Activated CD8-positive, alpha-beta T cell treated with anti-CD3 and anti-CD28 coated beads for 36 hours (primary cell): ENCODE measurements at regions of chr11 and their contacts with region 1.

Region 1: DNA sequence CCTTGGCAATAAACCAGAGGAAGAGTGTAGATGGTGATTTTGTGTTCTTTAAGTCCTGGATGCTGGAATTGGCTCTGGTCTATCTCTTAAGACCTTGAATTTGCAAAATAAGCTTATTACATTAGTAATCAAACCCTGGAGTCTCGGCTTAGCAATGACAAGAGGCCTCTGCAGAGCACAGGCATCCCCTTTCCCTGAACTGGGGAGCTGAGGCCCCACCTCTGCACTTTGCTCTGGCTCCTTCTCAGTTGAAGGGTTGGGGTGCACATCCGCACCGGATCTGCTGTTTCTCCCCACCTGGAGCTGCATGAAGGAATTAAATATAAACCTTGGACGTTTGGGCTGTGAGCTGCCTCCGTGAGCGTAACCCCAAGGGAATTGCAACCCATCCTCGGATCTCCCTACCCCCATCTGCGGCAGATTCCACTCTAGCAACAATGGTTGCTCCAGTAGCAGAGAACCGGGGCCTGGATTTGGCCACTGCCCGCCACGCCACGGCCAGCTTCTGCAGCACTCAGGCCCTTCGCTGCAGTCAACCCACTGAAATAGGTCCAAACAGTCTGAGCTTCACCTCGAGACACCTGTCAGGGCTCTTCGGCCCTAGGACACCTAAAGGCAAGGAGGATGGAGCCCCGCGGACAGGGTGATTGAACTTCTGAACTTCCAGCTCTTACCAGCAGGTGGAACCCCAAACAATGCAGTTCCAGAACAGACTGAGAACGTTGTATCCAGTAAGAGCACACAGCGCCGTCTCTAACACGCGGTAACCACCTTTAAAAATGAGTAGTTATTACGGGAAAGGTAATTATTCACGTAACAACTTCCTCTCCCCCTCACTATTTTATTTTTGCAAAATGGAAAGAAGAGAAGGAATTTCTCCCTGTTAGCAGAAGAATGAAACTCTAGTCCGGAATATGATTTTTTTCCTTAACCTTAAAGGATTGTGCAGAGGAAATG is 54.8 kb upstream of the CAPRIN1 start:
- DNase-seq: peak; percentile 85
- ATAC-seq: peak; percentile 100
- H3K4me3 Mint-ChIP-seq: peak overlapping the region; percentile 40
- H3K27ac Mint-ChIP-seq: no peak overlapping the region
- H3K4me1 Mint-ChIP-seq: peaks cover 8% of the 10 kb centered on the region
- H3K27me3 Mint-ChIP-seq: peaks cover 25% of the 10 kb centered on the region
- CTCF ChIP-seq: peak; percentile 85

Region 2: GRCh38 chr11:33857933-33858371 is 138.8 kb before region 1 on chr11:
- CTCF ChIA-PET with region 1: interaction called, 13 read pairs
- POLR2A ChIA-PET with region 1: no interaction called
- intact Hi-C with region 1: no loop called
- DNase-seq: peak; percentile 86
- ATAC-seq: peak; percentile 90
- H3K4me3 Mint-ChIP-seq: no peak overlapping the region
- H3K27ac Mint-ChIP-seq: no peak overlapping the region
- H3K4me1 Mint-ChIP-seq: no peaks in the 10 kb centered on the region
- H3K27me3 Mint-ChIP-seq: peaks cover 34% of the 10 kb centered on the region
- CTCF ChIP-seq: peak; percentile 86

Region 3: GRCh38 chr11:33926671-33927552 is 69.9 kb before region 1 on chr11:
- CTCF ChIA-PET with region 1: no interaction called
- POLR2A ChIA-PET with region 1: no interaction called
- intact Hi-C with region 1: no loop called
- DNase-seq: no peak
- ATAC-seq: no peak
- H3K4me3 Mint-ChIP-seq: no peak overlapping the region
- H3K27ac Mint-ChIP-seq: no peak overlapping the region
- H3K4me1 Mint-ChIP-seq: peaks cover 3% of the 10 kb centered on the region
- H3K27me3 Mint-ChIP-seq: peaks cover 26% of the 10 kb centered on the region
- CTCF ChIP-seq: no peak

Region 4: GRCh38 chr11:34051349-34052035 is 54.7 kb after region 1 on chr11 and contains the start of gene CAPRIN1:
- CTCF ChIA-PET with region 1: interaction called, 7 read pairs
- POLR2A ChIA-PET with region 1: interaction called, 5 read pairs
- intact Hi-C with region 1: loop called (anchors 5 kb)
- DNase-seq: peak; percentile 88
- ATAC-seq: peak; percentile 79
- H3K4me3 Mint-ChIP-seq: peak within 1 kb of the TSS; percentile 97
- H3K27ac Mint-ChIP-seq: peak within 1 kb of the TSS; percentile 99
- H3K4me1 Mint-ChIP-seq: peaks cover 15% of the 10 kb centered on the region
- H3K27me3 Mint-ChIP-seq: no peaks in the 10 kb centered on the region
- CTCF ChIP-seq: no peak
- total RNA-seq, gene CAPRIN1: 297 to 328 TPM

Region 5: DNA sequence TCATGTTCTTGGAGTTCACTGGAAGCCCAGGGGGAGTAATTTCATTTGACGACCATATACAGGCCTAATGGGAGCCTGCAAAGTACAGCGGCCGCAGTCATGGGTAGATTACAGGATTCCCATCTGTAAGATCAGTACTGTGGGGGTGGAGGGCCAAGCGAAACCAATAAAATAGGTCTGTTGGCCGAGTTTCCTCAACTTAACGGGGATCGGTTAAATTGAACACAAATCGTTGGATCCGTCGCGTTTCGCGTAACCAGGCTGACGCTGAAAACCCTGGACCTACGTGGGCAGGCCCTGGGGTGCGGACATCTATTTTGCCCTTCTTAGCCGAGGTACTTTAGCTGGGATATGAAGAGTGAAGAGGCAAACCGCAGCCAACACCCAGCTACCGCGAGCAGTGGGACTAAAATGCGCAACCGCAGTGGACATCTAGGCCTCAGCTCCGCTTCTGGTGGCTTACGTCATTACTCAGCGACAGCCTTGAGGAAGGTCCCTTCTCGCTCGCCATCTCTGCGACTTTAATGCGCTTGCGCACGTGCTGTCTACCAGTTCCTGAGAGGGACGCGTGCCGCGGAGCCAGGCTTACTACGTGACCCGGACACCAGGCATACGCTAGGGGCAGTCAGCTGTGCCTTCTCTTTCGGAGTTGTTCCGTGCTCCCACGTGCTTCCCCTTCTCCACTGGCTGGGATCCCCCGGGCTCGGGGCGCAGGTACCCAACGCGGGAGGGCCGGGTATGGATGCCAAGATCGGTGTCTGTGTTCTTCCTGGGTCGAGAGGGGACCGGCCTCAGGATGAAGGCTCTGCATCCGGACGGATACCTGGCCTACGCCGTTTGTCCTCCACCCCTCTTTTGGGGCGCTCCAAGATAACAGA is 108.5 kb after region 1 on chr11 and contains the start of gene NAT10:
- CTCF ChIA-PET with region 1: interaction called, 11 read pairs
- POLR2A ChIA-PET with region 1: interaction called, 3 read pairs
- intact Hi-C with region 1: loop called (anchors 10 kb)
- DNase-seq: peak; percentile 98
- ATAC-seq: peak; percentile 93
- H3K4me3 Mint-ChIP-seq: peak within 1 kb of the TSS; percentile 97
- H3K27ac Mint-ChIP-seq: peak within 1 kb of the TSS; percentile 97
- H3K4me1 Mint-ChIP-seq: peaks cover 42% of the 10 kb centered on the region
- H3K27me3 Mint-ChIP-seq: no peaks in the 10 kb centered on the region
- CTCF ChIP-seq: no peak
- total RNA-seq, gene NAT10: 129 to 137 TPM

Region 6: GRCh38 chr11:34357701-34358257 is 361.0 kb after region 1 on chr11 and contains the start of gene ABTB2:
- CTCF ChIA-PET with region 1: interaction called, 5 read pairs
- POLR2A ChIA-PET with region 1: no interaction called
- intact Hi-C with region 1: loop called (anchors 2 kb)
- DNase-seq: peak; percentile 99
- ATAC-seq: peak; percentile 92
- H3K4me3 Mint-ChIP-seq: peak within 1 kb of the TSS; percentile 76
- H3K27ac Mint-ChIP-seq: peak within 1 kb of the TSS; percentile 77
- H3K4me1 Mint-ChIP-seq: peaks cover 28% of the 10 kb centered on the region
- H3K27me3 Mint-ChIP-seq: peaks cover 35% of the 10 kb centered on the region
- CTCF ChIP-seq: no peak
- total RNA-seq, gene ABTB2: 2.4 to 2.5 TPM